ENCODE measurements at regions of chr17 and their contacts with region 1.

Region 1: GRCh38 chr17:44919885-44920564 is 4.7 kb upstream of the GFAP start:
- DNase-seq: peak; percentile 80
- ATAC-seq: peak; percentile 96
- H3K4me3 ChIP-seq: no peak overlapping the region
- H3K27ac ChIP-seq: no peak overlapping the region
- H3K4me1 ChIP-seq: peaks cover 9% of the 10 kb centered on the region; the same call in 1 of the 2 replicates
- H3K27me3 ChIP-seq: peaks cover 5% of the 10 kb centered on the region; the same call in 1 of the 2 replicates
- CTCF ChIP-seq: peak; percentile 94
- POLR2A ChIP-seq: 0 out of 2 replicates have a peak, but pooled peaks have one; percentile 43
- RAD21 ChIP-seq: peak; percentile 95

Region 2: DNA sequence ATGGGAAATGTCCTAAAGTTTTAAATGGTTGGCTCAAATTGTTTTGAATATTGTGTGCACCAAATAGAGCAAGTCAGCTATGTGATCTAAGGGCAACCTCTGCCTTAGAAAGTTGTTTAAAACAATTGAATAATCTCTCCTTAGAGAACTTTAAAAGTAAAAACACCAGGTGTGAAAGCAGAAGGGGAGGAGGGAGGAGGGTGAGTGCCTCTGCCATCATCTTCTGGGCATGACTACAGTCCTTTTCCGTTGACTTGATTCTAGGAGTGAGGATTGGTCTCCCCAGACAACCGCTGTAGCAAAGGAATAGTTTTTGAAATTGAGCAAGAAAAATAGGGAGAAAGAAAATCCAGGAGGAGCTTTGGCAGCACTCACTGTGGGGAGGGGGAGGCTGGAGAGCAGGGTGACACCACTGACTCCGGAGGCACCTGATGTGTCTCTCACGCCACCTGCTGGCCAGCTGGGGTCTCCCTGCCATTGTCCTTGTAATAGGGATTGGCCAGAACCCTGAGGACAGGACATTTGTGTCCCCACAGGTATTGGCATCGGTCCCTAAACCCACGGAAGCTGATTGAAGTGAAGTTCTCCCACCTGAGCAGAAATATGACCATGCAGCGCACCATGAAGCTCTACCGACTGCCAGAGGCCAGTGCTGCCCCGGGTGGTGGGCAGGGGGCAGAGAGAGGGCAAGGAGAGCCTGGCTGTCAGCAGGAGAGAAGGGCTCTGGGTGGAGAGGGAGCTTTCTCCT is 179.0 kb after region 1 on chr17:
- CTCF ChIA-PET with region 1: interaction called, 3 read pairs
- POLR2A ChIA-PET with region 1: no interaction called
- dilution Hi-C with region 1: no loop called
- in situ Hi-C with region 1: no loop called
- intact Hi-C with region 1: loop called (anchors 1 kb)
- DNase-seq: peak; percentile 66
- ATAC-seq: peak; percentile 85
- H3K4me3 ChIP-seq: no peak overlapping the region
- H3K27ac ChIP-seq: peak overlapping the region; percentile 66; the same call in 1 of the 2 replicates
- H3K4me1 ChIP-seq: peaks cover 7% of the 10 kb centered on the region; the same call in 1 of the 2 replicates
- H3K27me3 ChIP-seq: no peaks in the 10 kb centered on the region
- CTCF ChIP-seq: peak; percentile 78
- POLR2A ChIP-seq: no peak
- RAD21 ChIP-seq: peak; percentile 77

Measured in IMR-90 (cell line).